CD8-positive, alpha-beta memory T cell (primary cell): ENCODE measurements at regions of chr1 and their contacts with region 1.

Region 1: DNA sequence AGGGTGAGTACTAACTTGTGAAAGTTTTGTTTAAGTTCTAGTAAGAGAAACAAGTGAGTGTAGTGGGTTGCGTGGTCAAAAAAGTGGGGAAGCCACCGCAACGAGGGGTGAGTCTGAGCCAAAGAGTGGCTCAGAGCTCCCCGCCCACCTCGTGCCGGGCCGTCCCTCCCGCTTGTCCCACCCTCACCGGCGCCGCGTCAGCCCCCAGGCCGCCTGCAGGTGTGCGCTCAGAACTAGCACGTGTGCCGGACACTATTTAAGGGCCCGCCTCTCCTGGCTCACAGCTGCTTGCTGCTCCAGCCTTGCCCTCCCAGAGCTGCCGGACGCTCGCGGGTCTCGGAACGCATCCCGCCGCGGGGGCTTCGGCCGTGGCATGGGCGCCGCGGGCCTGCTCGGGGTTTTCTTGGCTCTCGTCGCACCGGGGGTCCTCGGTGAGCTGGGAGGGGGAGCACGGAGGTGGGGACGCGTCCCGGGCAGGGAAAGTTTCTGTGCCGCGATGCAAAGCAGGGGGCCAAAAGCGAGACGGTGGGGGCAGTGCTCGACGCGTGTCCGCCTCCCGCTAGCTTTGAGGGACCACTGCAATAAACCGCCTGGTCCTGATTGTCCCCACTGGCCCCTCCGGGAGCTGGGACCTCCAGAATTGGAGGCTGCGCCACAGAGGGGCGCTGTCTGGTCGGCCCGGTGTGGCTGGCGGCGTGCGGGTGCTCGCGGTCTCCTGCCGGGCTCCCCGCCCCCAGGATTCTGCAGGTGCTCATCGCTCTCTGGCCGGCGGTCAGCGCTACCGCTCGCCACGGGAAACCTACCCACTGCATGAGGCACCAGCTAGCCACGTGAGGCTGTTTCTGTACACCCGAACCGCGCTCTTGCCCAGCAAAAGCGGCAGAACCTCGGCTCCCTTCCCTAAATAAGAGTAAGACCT is at the start of gene CR2:
- DNase-seq: peak; percentile 3 to 65 (median 25)
- H3K4me3 ChIP-seq: peak within 1 kb of the TSS; percentile 32
- H3K4me3 Mint-ChIP-seq: peak within 1 kb of the TSS; percentile 36 to 71 (median 64)
- H3K27ac ChIP-seq: no peak within 1 kb of the TSS
- H3K27ac Mint-ChIP-seq: peak within 1 kb of the TSS in 2 of 8 donors; percentile 2 to 12
- H3K4me1 ChIP-seq: peaks cover 23% of the 10 kb centered on the region
- H3K4me1 Mint-ChIP-seq: peaks cover 5 to 19% (median 12%) of the 10 kb centered on the region in 3 donors
- H3K27me3 ChIP-seq: peaks cover 8% of the 10 kb centered on the region
- H3K27me3 Mint-ChIP-seq: peaks cover 14 to 45% of the 10 kb centered on the region in 2 donors
- total RNA-seq, gene CR2: 1.6 TPM

Region 2: DNA sequence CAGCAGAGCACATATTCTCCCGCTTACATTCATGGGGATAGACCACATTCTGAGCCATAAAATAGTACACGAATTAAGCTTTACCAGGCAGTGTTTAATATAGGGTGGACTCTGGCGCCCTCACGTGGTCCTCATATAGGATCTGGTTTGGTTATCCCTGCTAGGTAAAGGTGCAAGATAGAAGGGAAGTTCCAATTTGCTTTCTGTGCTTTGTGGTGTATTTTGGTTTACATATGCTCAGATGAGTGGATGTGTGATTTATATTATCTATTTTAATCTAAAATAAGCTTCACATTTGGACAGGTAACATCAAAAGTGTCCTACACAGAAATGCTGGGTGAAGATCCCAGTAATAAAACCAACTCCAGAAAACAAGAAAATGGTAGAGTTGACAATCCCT is 45.3 kb after region 1 on chr1:
- CTCF ChIA-PET with region 1: interaction called, 18 read pairs
- POLR2A ChIA-PET with region 1: no interaction called
- DNase-seq: peak; percentile 25 to 70 (median 46)
- H3K4me3 ChIP-seq: no peak overlapping the region
- H3K4me3 Mint-ChIP-seq: no peak overlapping the region
- H3K27ac ChIP-seq: no peak overlapping the region
- H3K27ac Mint-ChIP-seq: no peak overlapping the region
- H3K4me1 ChIP-seq: peaks cover 6% of the 10 kb centered on the region
- H3K4me1 Mint-ChIP-seq: peaks cover 11 to 20% (median 14%) of the 10 kb centered on the region in 3 donors
- H3K27me3 ChIP-seq: peaks cover 12% of the 10 kb centered on the region
- H3K27me3 Mint-ChIP-seq: peaks cover 8 to 52% of the 10 kb centered on the region in 2 donors